ENCODE measurements at regions of chr1 and their contacts with region 1.

Region 1: GRCh38 chr1:204885288-204885711 is 14.6 kb downstream of the NFASC start:
- DNase-seq: no peak
- ATAC-seq: no peak
- H3K4me3 ChIP-seq: no peak overlapping the region
- H3K27ac ChIP-seq: no peak overlapping the region
- H3K4me1 ChIP-seq: no peaks in the 10 kb centered on the region
- H3K27me3 ChIP-seq: no peaks in the 10 kb centered on the region

Region 2: GRCh38 chr1:204819495-204819894 is 65.8 kb before region 1 on chr1:
- intact Hi-C with region 1: loop called in 1 of 2 experiments (anchors 10 kb)
- DNase-seq: no peak
- ATAC-seq: peak; percentile 50
- H3K4me3 ChIP-seq: no peak overlapping the region
- H3K27ac ChIP-seq: peak overlapping the region in 1 of 2 donors; percentile 91
- H3K4me1 ChIP-seq: peaks cover 8 to 13% of the 10 kb centered on the region in 2 donors
- H3K27me3 ChIP-seq: no peaks in the 10 kb centered on the region

Region 3: GRCh38 chr1:204830747-204831146 is 54.6 kb before region 1 on chr1:
- intact Hi-C with region 1: loop called in 1 of 2 experiments (anchors 5 kb)
- DNase-seq: no peak
- ATAC-seq: no peak
- H3K4me3 ChIP-seq: no peak overlapping the region
- H3K27ac ChIP-seq: no peak overlapping the region
- H3K4me1 ChIP-seq: no peaks in the 10 kb centered on the region
- H3K27me3 ChIP-seq: no peaks in the 10 kb centered on the region

Measured in aorta (tissue), 5 donors.